ENCODE measurements at regions of chr1 and their contacts with region 1.

Region 1: GRCh38 chr1:226121587-226122400 is 59.3 kb downstream of the H3-3A start:
- DNase-seq: peak; percentile 56 to 74 (median 68)
- ATAC-seq: peak; percentile 81
- H3K4me3 ChIP-seq: peak overlapping the region; percentile 49 to 60
- H3K27ac ChIP-seq: peak overlapping the region; percentile 82 to 93 (median 88)
- H3K4me1 ChIP-seq: peaks cover 37% of the 10 kb centered on the region
- H3K27me3 ChIP-seq: no peaks in the 10 kb centered on the region
- CTCF ChIP-seq: peak; percentile 61 to 98 (median 94)
- POLR2A ChIP-seq: peak; percentile 21 to 24 (median 23)

Region 2: DNA sequence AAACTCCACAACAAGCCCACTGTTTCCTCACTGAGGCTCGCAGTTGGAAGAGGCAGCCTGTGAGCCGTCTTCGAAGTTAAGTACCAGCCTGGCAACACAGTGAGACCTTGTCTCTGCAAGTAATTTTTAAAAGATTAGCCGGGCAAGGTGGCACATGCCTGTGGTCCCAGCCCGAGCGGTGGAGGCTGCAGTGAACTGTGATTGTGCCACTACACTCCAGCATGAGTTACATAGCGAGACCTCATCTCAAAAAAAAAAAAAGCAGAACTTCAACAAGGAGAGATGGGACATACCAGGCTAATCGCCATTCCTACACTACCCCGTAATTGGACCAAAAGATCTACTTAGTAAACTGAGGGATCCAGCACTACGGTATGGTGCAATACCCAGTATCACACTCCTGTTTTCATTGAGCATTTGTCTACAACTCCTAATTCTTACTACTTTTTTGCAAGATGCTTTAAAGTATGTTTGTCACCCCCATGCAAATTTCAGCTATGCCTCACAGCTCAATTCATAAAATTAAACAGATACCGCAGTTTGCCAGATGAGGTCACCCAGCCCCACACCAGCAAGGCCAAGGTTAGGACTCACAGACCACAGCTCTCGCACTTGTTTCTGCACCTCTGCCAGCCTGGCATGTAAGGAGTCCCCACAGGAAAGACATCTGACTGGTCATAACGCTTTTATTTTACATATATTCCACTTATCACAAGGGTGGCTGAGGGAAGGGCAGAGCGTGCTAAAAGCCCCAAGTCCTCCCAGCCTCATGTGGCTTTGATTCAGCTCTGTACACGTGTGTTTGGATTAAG is 143.7 kb before region 1 on chr1:
- intact Hi-C with region 1: no loop called
- DNase-seq: peak in 3 of 4 donors; percentile 50 to 64 (median 59)
- ATAC-seq: no peak
- H3K4me3 ChIP-seq: no peak overlapping the region
- H3K27ac ChIP-seq: peak overlapping the region in 3 of 4 donors; percentile 35 to 77 (median 58)
- H3K4me1 ChIP-seq: peaks cover 42% of the 10 kb centered on the region
- H3K27me3 ChIP-seq: no peaks in the 10 kb centered on the region
- CTCF ChIP-seq: peak in 1 of 7 experiments; percentile 7
- POLR2A ChIP-seq: no peak

Region 3: DNA sequence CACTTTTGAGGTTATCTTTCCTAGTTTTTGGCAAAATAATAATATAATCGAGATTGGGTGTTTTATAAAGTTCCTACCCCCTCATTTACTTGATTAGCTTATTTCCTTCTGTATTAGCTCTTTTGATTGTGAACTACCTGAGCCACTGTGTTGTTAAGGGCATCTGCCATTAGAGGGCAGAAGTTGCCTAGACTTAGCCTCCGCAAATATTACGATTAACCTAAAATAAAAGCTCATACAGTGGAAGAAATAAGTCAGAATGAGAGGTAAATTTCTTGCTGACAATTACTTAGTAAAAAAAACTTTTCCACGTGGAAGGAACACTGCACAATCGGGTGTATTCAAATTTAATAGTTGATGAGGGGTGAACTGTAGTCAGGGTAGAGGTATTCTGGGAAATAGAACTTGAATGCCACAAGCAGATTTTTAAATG is 57.0 kb before region 1 on chr1:
- intact Hi-C with region 1: loop called (anchors 5 kb)
- DNase-seq: peak; percentile 58 to 76 (median 67)
- ATAC-seq: no peak
- H3K4me3 ChIP-seq: peak overlapping the region in 1 of 2 donors; percentile 54
- H3K27ac ChIP-seq: peak overlapping the region in 2 of 4 donors; percentile 99 to 100
- H3K4me1 ChIP-seq: peaks cover 59% of the 10 kb centered on the region
- H3K27me3 ChIP-seq: no peaks in the 10 kb centered on the region
- CTCF ChIP-seq: peak; percentile 22 to 82 (median 53)
- POLR2A ChIP-seq: no peak

Region 4: GRCh38 chr1:226078374-226078773 is 43.4 kb before region 1 on chr1:
- intact Hi-C with region 1: no loop called
- DNase-seq: no peak
- ATAC-seq: no peak
- H3K4me3 ChIP-seq: no peak overlapping the region
- H3K27ac ChIP-seq: no peak overlapping the region
- H3K4me1 ChIP-seq: peaks cover 4% of the 10 kb centered on the region
- H3K27me3 ChIP-seq: no peaks in the 10 kb centered on the region
- CTCF ChIP-seq: no peak
- POLR2A ChIP-seq: no peak

Region 5: DNA sequence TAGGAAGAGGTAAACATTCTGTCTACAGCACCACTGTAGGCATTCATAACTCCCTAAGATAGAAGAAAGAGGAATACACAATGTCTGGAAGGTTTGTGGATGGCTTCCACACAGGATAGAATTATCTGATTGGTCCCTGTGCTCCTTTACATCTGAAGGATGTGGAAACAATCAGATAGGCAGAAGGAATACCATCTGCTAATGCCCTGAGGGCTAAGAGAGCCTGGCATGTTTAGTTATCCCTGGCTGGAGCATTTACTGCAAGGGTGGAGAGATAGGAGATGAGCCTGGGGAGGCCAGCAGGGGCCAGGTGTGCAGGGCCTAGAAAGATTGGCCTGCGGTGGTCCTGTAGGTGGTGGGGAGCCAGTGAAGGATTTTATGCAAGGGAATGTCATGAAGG is 73.3 kb after region 1 on chr1:
- intact Hi-C with region 1: loop called (anchors 5 kb)
- DNase-seq: no peak
- ATAC-seq: no peak
- H3K4me3 ChIP-seq: no peak overlapping the region
- H3K27ac ChIP-seq: no peak overlapping the region
- H3K4me1 ChIP-seq: no peaks in the 10 kb centered on the region
- H3K27me3 ChIP-seq: no peaks in the 10 kb centered on the region
- CTCF ChIP-seq: no peak
- POLR2A ChIP-seq: no peak

Region 6: DNA sequence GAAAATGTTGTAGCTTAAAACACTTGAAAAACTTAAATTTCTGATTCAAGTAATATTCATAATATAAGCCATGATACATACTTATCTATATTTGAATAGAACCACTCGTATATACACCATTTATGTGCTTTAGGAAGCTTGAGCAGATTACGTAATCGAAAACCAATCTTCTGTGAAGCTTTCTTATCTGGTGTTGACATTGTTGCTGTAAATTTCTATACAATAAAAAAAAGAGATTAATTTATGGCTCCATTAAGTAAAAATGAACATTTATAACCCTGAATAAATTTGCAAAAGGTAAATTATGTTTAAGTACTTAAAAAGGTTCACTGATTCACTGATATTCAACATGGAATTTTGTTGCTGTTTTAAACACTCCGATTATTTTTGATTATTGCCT is 165.8 kb after region 1 on chr1:
- intact Hi-C with region 1: no loop called
- DNase-seq: no peak
- ATAC-seq: no peak
- H3K4me3 ChIP-seq: no peak overlapping the region
- H3K27ac ChIP-seq: no peak overlapping the region
- H3K4me1 ChIP-seq: no peaks in the 10 kb centered on the region
- H3K27me3 ChIP-seq: no peaks in the 10 kb centered on the region
- CTCF ChIP-seq: no peak
- POLR2A ChIP-seq: no peak

Region 7: DNA sequence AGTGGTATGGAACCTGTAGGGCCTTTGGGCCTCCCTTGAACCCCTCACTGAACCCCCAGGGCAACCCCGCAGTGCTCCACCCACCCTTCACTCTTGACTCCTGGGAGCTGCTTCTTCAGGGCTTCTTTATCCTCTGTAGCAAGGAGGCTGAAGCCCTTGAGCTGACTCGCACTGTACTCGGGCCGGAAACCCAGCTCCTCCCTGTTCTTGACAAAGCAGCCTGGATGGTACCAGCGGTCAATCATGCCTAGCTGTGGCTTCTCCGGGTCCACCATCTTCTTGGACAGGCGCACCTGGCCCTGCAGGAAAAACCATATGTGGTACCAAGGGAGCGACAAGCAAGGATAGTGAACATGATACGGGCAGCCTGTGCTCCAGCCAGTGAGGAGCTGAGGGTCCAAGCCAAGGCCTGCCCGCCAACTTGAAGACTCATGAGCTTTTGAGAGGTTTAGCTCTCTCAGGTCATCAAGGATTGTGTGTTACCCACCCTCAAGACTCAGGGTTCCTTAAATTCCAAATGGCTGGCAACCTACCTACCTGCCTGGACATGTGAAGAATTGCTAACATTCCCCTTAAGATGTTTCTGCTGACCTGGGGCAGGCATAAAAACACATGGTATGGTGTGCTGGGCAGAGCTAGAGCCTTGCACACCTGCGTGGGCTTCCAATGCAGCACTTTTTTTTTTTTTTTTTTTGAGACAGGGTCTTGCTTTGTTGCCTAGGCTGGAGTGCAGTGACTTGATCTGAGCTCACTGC is 268.7 kb after region 1 on chr1:
- intact Hi-C with region 1: no loop called
- DNase-seq: no peak
- ATAC-seq: no peak
- H3K4me3 ChIP-seq: no peak overlapping the region
- H3K27ac ChIP-seq: no peak overlapping the region
- H3K4me1 ChIP-seq: peaks cover 7% of the 10 kb centered on the region
- H3K27me3 ChIP-seq: no peaks in the 10 kb centered on the region
- CTCF ChIP-seq: no peak
- POLR2A ChIP-seq: no peak

Measured in body of pancreas (tissue), 4 donors.